ENCODE measurements at regions of chr1 and their contacts with region 1.

Region 1: DNA sequence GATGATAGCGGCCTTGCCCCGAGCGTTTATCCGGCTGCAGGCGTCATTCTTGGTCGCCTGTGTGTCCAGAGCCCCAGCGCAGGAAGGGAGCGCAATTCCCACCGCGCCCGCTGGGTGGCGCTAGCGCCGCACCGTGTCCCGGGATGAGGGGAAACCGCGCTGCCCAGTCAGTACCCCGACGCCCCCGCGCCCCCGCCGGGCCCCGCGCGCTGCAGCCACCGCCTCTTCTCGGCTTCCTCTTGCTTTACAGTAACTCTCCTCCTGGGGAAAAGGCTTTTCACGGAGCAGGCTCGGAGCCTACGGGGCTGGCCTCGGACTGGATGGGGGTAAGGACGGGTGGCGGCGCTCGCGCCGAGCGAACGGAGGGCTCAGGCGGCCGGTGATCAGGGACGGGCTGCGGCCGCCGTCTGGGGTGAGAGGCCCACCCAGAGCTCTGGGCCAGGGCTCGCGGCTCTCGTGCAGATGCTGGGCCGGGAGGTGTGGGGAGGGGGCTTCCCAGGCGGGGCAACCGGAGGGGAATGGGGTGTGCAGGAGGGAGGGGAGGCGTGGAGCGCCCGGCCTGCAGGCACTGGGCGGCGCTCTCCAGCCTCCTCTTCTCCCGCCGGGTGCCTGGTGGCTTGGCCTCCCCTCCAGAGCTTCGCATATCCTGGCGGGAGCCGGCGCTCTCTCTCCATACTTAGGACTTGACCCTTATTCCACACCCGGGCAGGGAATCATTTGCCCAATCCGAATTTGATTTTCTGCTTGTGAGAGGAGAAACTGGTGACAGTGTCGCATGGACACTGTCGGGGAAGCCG is 29.8 kb downstream of the TEX35 start:
- DNase-seq: peak; percentile 89
- ATAC-seq: peak; percentile 90 to 93

Region 2: GRCh38 chr1:178412400-178412770 is 130.4 kb before region 1 on chr1:
- intact Hi-C with region 1: no loop called
- DNase-seq: no peak
- ATAC-seq: no peak

Region 3: DNA sequence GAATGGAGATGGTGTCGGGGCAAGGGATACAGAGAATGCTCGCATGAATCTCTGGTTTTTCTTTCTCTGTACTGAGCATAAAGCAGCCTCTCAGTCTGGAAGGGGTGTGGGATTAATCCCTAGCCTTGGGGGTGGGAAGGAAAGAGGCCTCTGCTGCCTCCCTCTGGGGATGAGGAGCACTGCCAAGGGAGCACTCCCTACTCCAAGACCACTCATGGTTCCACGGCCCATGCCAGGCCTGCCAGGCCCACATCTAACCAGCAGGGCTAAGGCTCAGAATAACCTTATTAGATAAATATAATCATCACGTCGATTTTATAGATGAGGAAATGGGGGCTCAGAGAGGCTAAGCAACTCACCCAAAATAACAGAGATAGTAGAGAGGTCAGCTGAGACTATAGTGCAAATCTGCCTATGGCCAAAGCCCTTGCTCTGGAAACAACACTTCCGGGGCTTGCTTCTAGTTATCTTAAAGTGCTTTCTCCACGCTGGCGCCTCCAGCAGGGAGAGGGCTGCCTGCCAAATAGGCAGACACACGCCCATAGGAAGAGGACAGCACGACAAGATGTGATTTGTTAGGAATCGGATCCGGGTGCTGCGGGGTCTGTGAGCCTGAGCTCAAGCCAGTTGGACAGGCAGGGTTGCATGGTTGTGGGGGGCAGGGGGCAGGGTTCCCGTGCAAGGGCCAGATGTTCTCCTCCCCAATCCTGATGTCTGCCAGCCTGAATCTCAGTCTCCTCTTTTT is 29.3 kb before region 1 on chr1:
- intact Hi-C with region 1: no loop called
- DNase-seq: no peak
- ATAC-seq: peak; percentile 40 to 58

Region 4: DNA sequence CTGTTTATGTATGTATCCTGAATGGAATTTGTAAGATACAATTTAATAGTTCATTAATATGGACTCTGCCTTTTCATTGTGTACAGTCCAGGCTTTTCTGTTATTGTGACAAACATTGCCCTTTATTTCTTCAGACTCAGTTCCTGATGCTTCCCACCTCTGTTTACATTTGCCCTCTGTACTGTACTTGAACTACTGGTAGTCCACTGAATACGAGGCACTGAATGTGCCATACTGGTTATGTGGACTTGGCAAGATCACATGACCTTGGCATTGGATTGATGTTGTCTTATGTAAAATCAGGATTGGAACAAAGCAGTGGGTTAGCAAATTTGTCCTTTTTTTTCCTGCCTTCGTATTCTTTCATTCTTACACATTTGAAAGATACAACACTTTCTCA is 210.1 kb after region 1 on chr1:
- intact Hi-C with region 1: loop called (anchors 1 to 2 kb)
- DNase-seq: no peak
- ATAC-seq: no peak

Measured in left cardiac atrium (tissue), 4 donors.